ENCODE measurements at regions of chr18 and their contacts with region 1.

Region 1: GRCh38 chr18:36284671-36285295 is 12.7 kb upstream of the FHOD3 start:
- DNase-seq: peak in 2 of 6 donors; percentile 19 to 50
- ATAC-seq: peak in 3 of 4 donors; percentile 75 to 86 (median 82)
- H3K4me3 ChIP-seq: no peak overlapping the region
- H3K27ac ChIP-seq: no peak overlapping the region
- H3K4me1 ChIP-seq: no peaks in the 10 kb centered on the region
- H3K27me3 ChIP-seq: no peaks in the 10 kb centered on the region
- CTCF ChIP-seq: peak; percentile 70 to 78 (median 74)

Region 2: DNA sequence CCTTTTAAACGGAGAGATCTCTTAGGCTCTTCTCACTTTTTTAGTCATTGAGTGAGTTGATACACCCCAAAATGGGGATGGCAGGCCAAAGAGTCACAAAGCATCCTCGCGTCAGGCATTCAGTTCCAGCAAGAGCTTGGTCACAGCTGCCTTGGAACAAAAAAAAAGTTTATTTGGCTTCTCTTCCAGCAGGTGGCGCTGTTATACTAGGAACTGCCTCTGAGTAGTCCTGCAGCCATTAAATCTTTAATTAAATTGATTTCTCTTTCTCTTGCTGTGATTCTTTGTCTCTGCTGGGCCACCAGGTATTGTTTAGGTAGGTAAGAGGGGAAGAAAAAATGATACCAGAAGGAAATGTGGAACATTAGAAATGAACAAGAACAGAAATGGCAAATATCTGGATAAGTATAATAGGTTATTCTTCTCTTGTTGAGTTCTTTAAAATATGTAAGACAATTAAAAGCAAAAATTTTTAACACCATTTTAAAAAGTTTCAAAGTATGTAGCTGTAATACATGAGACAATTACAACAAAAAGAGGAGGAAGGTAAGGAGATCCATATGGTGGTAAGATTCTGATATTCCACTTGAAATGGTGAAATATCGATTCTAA is 528.2 kb before region 1 on chr18:
- intact Hi-C with region 1: loop called in 2 of 3 experiments (anchors 10 kb)
- DNase-seq: peak in 3 of 6 donors; percentile 27 to 55 (median 47)
- ATAC-seq: peak; percentile 82 to 89 (median 86)
- H3K4me3 ChIP-seq: no peak overlapping the region
- H3K27ac ChIP-seq: no peak overlapping the region
- H3K4me1 ChIP-seq: no peaks in the 10 kb centered on the region
- H3K27me3 ChIP-seq: no peaks in the 10 kb centered on the region
- CTCF ChIP-seq: peak; percentile 56 to 84 (median 76)

Region 3: GRCh38 chr18:36015629-36016028 is 269.2 kb before region 1 on chr18:
- intact Hi-C with region 1: loop called in 2 of 3 experiments (anchors 5 to 10 kb)
- DNase-seq: no peak
- ATAC-seq: no peak
- H3K4me3 ChIP-seq: no peak overlapping the region
- H3K27ac ChIP-seq: no peak overlapping the region
- H3K4me1 ChIP-seq: no peaks in the 10 kb centered on the region
- H3K27me3 ChIP-seq: no peaks in the 10 kb centered on the region
- CTCF ChIP-seq: no peak

Region 4: GRCh38 chr18:36095936-36096519 is 188.8 kb before region 1 on chr18:
- intact Hi-C with region 1: loop called in 2 of 3 experiments (anchors 5 to 10 kb)
- DNase-seq: no peak
- ATAC-seq: peak in 3 of 4 donors; percentile 67 to 78 (median 75)
- H3K4me3 ChIP-seq: no peak overlapping the region
- H3K27ac ChIP-seq: no peak overlapping the region
- H3K4me1 ChIP-seq: no peaks in the 10 kb centered on the region
- H3K27me3 ChIP-seq: no peaks in the 10 kb centered on the region
- CTCF ChIP-seq: peak in 2 of 4 donors; percentile 26 to 38

Region 5: GRCh38 chr18:36217348-36217747 is 67.4 kb before region 1 on chr18:
- intact Hi-C with region 1: no loop called
- DNase-seq: no peak
- ATAC-seq: no peak
- H3K4me3 ChIP-seq: no peak overlapping the region
- H3K27ac ChIP-seq: no peak overlapping the region
- H3K4me1 ChIP-seq: no peaks in the 10 kb centered on the region
- H3K27me3 ChIP-seq: no peaks in the 10 kb centered on the region
- CTCF ChIP-seq: no peak

Region 6: DNA sequence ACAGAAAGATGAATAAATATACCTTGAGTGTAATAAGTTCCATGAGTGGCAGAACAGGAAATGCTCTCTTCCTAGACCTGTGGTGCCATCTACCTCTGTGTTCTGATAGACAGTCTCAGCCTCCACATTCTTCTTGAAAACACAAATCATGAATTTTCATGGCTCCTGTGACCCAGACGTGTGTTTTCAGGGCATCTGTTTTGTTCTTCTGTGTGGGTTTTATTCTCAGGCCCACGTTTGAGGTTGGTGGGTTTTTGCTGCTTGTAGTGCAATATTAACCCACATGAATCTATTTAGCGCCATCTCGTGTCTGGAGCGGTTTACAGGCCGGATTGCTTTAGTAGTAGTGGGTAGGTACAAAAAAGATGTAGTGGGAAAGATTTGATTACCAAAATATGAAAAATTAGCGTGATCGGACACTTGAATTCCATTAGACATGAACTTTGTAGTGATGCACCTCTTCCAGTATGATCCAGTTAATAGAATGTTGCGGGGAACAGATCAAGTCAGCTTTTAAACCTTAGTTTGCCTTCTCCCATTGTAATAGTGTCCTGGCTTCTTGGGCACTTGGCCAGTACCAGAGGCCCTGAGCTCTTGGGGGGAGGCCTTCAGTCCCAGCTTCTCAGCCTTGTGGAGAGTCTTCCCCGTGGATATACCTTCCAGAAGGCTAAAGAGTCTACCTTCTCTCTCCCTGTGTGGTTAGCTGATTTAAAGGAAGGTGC is 287.5 kb after region 1 on chr18:
- intact Hi-C with region 1: loop called in 1 of 3 experiments (anchors 10 kb)
- DNase-seq: peak in 3 of 6 donors; percentile 21 to 51 (median 28)
- ATAC-seq: peak; percentile 71 to 90 (median 86)
- H3K4me3 ChIP-seq: no peak overlapping the region
- H3K27ac ChIP-seq: no peak overlapping the region
- H3K4me1 ChIP-seq: no peaks in the 10 kb centered on the region
- H3K27me3 ChIP-seq: no peaks in the 10 kb centered on the region
- CTCF ChIP-seq: peak in 3 of 4 donors; percentile 20 to 33 (median 31)